Posterior vena cava (tissue), 2 donors: ENCODE measurements at regions of chr11 and their contacts with region 1.

Region 1: DNA sequence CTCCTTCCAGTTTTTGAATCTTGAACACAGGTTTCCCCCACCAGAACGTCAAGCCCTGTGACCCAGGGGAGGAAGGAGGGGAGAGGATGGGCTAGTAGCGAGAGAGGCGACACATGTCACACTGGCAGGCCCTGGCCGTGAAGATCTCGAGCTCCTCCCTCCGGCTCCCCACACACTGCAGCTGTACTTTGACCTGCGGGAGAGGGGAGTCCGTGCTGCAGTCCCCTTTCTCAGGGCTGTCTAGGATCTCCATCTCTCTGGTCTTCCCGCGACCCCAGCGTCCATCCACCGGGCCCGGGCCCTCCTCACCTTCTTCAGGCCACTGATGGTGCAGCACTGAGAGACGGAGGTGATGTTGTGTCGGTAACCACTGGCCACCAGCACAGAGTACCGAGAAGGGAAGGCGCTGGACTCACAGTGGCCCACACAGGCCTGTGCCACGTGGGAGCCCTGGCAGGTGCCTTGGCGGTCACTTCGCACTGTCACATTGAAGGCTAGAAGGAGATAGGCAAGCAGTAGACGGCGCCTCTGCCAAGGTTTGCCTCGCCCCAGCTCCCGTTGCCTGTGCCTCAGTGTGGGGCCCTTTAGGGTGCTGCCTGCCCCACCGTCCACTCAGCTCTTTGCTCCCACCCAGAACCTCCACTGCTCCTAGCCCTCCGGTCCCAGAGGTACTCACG is 873 bp downstream of the GPHA2 start:
- DNase-seq: peak; percentile 45

Region 2: GRCh38 chr11:64908766-64909165 is 26.1 kb before region 1 on chr11:
- intact Hi-C with region 1: loop called in 1 of 2 experiments (anchors 1 kb)
- DNase-seq: no peak

Region 3: DNA sequence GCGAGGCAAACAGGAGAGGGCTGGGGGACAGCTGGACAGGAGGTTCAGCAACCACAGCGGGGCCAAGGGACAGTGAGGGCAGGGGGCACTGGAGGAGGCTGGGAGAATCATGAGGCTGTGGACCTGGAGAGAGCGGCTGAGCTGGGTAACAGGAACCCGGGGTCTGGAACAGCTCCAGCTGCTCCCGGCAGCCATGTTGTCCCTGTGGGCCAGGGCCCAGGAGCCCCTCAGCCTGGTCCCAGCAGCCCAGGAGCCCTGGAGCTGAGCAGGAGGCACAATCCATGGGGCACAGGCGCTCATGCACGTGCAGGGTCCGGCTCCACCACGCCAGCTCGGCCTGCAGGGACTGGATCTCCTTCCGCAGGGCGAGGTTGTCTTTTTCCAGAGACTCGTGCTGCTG is 54.6 kb after region 1 on chr11:
- intact Hi-C with region 1: loop called in 1 of 2 experiments (anchors 5 kb)
- DNase-seq: no peak